OCI-LY7 (cell line): ENCODE measurements at regions of chr22 and their contacts with region 1.

Region 1: GRCh38 chr22:23128269-23129108 is 13.3 kb downstream of the RSPH14 start:
- DNase-seq: peak; percentile 87
- H3K4me3 ChIP-seq: no peak overlapping the region
- H3K27ac ChIP-seq: no peak overlapping the region
- H3K4me1 ChIP-seq: peaks cover 17% of the 10 kb centered on the region
- CTCF ChIP-seq: peak; percentile 97

Region 2: GRCh38 chr22:22802339-22802970 is 326.0 kb before region 1 on chr22:
- CTCF ChIA-PET with region 1: no interaction called
- POLR2A ChIA-PET with region 1: no interaction called
- intact Hi-C with region 1: loop called (anchors 10 kb)
- DNase-seq: peak; percentile 56
- H3K4me3 ChIP-seq: no peak overlapping the region
- H3K27ac ChIP-seq: no peak overlapping the region
- H3K4me1 ChIP-seq: peaks cover 19% of the 10 kb centered on the region
- CTCF ChIP-seq: peak; percentile 87